GM10248 (cell line): ENCODE measurements at regions of chrX and their contacts with region 1.

Region 1: DNA sequence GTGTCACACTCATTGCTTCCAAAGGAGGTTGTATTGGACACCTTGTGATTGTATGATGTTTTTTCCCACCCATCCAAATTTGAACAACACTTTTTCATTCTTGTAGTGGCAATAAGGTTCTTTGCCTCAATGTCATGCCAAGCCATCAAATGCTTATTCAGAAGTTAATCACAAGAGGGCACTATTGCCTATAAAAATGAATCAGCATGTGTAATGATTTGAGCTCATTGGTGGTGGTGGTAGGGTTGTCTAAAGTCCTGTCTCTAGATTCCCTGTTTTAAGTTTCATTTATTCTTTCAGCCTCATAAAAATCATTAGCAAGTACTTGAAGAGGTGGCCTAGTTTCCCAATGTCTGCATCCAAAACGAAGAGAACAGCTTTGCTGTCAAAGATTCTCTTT is 37.0 kb downstream of the IRS4 start:
- DNase-seq: peak; percentile 2
- CTCF ChIP-seq: peak; percentile 36

Region 2: DNA sequence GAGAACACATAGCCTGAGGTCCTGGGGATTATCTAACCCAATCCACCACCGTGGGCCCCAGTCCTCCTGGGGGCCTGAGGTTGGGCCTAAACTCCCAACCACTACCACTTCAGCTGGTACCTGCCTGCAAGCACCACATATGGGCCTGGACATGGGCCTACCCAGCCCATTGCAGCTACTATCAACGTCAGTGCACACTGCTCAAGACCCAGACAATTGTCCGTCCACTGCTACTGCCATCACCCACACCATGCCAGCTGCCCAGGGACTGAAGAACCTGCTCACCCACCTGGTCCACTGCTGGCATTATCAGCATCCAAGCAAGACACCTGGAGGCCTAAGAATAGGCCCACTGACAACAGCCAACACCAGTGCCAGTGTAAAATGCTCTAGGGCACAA is 171.6 kb before region 1 on chrX:
- CTCF ChIA-PET with region 1: no interaction called
- POLR2A ChIA-PET with region 1: no interaction called
- DNase-seq: no peak
- CTCF ChIP-seq: no peak

Region 3: GRCh38 chrX:109384699-109385098 is 685.3 kb after region 1 on chrX:
- CTCF ChIA-PET with region 1: interaction called, 55 read pairs
- POLR2A ChIA-PET with region 1: no interaction called
- DNase-seq: no peak
- CTCF ChIP-seq: peak; percentile 25